ENCODE measurements at regions of chr11 and their contacts with region 1.

Region 1: DNA sequence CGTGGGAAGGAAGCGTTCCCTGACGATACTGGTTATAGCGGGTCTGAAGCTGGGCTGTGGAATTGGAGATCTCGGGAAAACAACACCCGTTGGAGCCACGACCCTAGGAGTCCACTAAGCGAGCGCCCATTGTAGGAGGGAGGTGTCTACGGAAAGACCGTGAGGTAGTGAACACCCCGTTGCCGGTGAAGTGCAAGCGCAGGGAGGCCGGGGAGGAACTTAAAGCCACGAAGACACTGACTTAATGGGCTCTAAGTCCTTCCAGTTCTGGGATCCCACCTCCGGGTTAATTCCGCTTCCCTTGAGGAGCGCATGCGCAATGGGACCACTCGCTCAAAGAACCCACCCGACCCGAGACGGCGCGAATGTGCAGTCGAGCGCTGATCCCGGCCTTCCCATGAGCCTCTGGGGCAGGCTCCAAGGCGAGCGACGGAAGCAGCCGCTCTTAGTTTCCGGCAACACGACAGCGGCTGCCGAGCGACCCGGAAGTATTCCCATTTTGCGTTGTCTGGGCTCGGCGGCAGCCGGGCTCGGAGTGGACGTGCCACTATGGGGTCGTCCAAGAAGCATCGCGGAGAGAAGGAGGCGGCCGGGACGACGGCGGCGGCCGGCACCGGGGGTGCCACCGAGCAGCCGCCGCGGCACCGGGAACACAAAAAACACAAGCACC is at the start of gene SART1:
- DNase-seq: peak; percentile 98 to 99
- ATAC-seq: peak; percentile 97 to 99 (median 98)
- H3K4me3 ChIP-seq: peak within 1 kb of the TSS; percentile 100
- H3K27ac ChIP-seq: peak within 1 kb of the TSS; percentile 91
- H3K4me1 ChIP-seq: peaks cover 15% of the 10 kb centered on the region
- H3K27me3 ChIP-seq: no peaks in the 10 kb centered on the region
- CTCF ChIP-seq: no peak
- total RNA-seq, gene SART1: 36.3 to 55.4 (median 49.3) TPM

Region 2: GRCh38 chr11:65860278-65861164 is 100.8 kb before region 1 on chr11 and contains the start of gene MUS81:
- intact Hi-C with region 1: no loop called
- DNase-seq: peak; percentile 97 to 98
- ATAC-seq: peak; percentile 68 to 82 (median 73)
- H3K4me3 ChIP-seq: peak within 1 kb of the TSS; percentile 100
- H3K27ac ChIP-seq: peak within 1 kb of the TSS; percentile 99
- H3K4me1 ChIP-seq: peaks cover 21% of the 10 kb centered on the region
- H3K27me3 ChIP-seq: no peaks in the 10 kb centered on the region
- CTCF ChIP-seq: peak; percentile 75
- total RNA-seq, gene MUS81: 28.0 to 35.6 (median 31.4) TPM

Region 3: GRCh38 chr11:65900125-65900898 is 61.1 kb before region 1 on chr11 and contains the start of gene FOSL1:
- intact Hi-C with region 1: no loop called
- DNase-seq: peak; percentile 92 to 93
- ATAC-seq: peak; percentile 85 to 93 (median 89)
- H3K4me3 ChIP-seq: peak within 1 kb of the TSS; percentile 82
- H3K27ac ChIP-seq: peak within 1 kb of the TSS; percentile 50
- H3K4me1 ChIP-seq: no peaks in the 10 kb centered on the region
- H3K27me3 ChIP-seq: peaks cover 0 to 8% (median 6%) of the 10 kb centered on the region in 3 donors
- CTCF ChIP-seq: no peak
- total RNA-seq, gene FOSL1: 0.75 to 12.6 (median 11.5) TPM

Region 4: GRCh38 chr11:66001942-66002647 is 40.7 kb after region 1 on chr11 and contains the starts of genes BANF1 and EIF1AD:
- intact Hi-C with region 1: loop called (anchors 1 to 5 kb)
- DNase-seq: peak; percentile 90 to 95
- ATAC-seq: peak; percentile 87 to 92 (median 88)
- H3K4me3 ChIP-seq: peak within 1 kb of the TSS; percentile 74
- H3K27ac ChIP-seq: peak within 1 kb of the TSS; percentile 96
- H3K4me1 ChIP-seq: peaks cover 30% of the 10 kb centered on the region
- H3K27me3 ChIP-seq: no peaks in the 10 kb centered on the region
- CTCF ChIP-seq: no peak
- total RNA-seq, gene BANF1: 298 to 384 (median 336) TPM
- total RNA-seq, gene EIF1AD: 24.8 to 44.5 (median 31.6) TPM

Region 5: GRCh38 chr11:66051766-66052663 is 90.6 kb after region 1 on chr11 and contains the start of gene SF3B2:
- intact Hi-C with region 1: no loop called
- DNase-seq: peak; percentile 98 to 99
- ATAC-seq: peak; percentile 99
- H3K4me3 ChIP-seq: peak within 1 kb of the TSS; percentile 94
- H3K27ac ChIP-seq: peak within 1 kb of the TSS; percentile 84
- H3K4me1 ChIP-seq: peaks cover 5% of the 10 kb centered on the region
- H3K27me3 ChIP-seq: peaks cover 0 to 7% (median 4%) of the 10 kb centered on the region in 3 donors
- CTCF ChIP-seq: no peak
- total RNA-seq, gene SF3B2: 62.8 to 114 (median 86.4) TPM

Measured in psoas muscle (tissue), 8 donors.